Caco-2 (cell line): ENCODE measurements at regions of chr13 and their contacts with region 1.

Region 1: DNA sequence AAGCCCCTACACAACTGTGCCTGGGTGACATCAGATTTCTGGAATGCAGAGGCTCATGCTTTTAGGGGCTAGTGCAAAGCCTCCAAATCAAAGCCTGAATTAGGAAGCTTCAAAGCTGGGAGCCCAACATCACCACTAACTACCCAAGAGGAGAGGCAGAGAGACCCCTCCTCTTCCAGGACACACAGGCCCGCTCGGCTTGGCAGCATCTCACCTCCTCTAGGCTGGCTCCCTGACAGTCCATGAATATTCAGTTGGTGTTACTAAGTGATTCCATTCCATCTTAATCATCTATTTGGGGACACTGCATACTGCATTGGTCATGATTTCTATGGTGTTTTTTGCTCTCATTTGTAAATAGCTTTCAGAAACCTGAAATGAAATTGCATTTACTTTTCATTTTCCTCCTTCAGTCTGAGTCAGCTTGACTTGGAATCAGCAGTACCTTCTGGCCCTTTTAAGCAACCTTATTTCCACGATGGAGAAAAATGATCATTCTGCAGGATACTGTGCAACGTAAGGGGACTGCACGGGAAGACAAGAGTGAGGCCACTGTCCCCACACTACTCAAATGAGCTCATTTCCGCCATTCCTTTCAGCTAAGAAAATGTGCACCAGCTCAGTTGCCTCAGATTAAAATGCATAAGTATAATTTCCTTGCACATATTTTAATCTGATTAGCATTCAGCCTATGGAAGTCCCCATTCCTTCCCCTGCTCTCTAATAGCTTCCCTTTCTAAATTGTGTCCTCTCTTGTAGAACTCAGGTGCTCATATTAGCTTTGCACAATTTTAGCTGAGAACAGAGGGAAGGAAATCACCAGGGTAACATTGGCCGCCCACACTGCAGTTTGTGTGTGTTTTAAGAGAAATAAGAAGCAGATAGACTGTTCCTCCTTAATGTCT is 219.9 kb downstream of the RFC3 start:
- DNase-seq: no peak
- H3K4me3 ChIP-seq: no peak overlapping the region
- H3K4me3 Mint-ChIP-seq: no peak overlapping the region
- H3K27ac Mint-ChIP-seq: no peak overlapping the region
- H3K4me1 ChIP-seq: peaks cover 28% of the 10 kb centered on the region
- H3K4me1 Mint-ChIP-seq: peaks cover 22% of the 10 kb centered on the region
- H3K27me3 ChIP-seq: no peaks in the 10 kb centered on the region
- H3K27me3 Mint-ChIP-seq: no peaks in the 10 kb centered on the region
- CTCF ChIP-seq: no peak

Region 2: DNA sequence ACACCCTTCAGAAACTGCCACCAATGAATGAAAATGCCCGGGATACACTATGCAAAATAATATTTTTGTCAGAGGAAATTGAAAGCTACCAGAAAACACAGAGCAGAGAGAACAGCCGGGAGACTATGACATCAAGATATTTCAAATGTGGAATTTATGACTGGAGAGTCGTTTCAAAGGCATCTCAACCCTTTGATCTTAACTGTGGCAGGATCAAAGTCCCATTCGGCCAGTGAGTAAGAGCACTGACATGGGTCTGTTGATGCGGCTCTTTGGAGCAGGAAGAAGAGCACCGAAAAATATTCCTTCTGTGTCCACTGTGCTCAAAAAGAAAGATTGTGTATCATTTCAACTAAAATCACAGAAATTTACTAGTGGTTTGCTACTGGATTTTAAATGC is 18.0 kb before region 1 on chr13:
- CTCF ChIA-PET with region 1: no interaction called
- POLR2A ChIA-PET with region 1: no interaction called
- intact Hi-C with region 1: loop called (anchors 1 kb)
- DNase-seq: peak; percentile 83 to 93
- H3K4me3 ChIP-seq: 0 out of 2 replicates have a peak overlapping the region, but pooled peaks have one; percentile 17
- H3K4me3 Mint-ChIP-seq: peak overlapping the region; percentile 66
- H3K27ac Mint-ChIP-seq: peak overlapping the region; percentile 88
- H3K4me1 ChIP-seq: peaks cover 26% of the 10 kb centered on the region
- H3K4me1 Mint-ChIP-seq: peaks cover 29% of the 10 kb centered on the region
- H3K27me3 ChIP-seq: no peaks in the 10 kb centered on the region
- H3K27me3 Mint-ChIP-seq: no peaks in the 10 kb centered on the region
- CTCF ChIP-seq: no peak

Region 3: GRCh38 chr13:34416833-34417425 is 379.0 kb after region 1 on chr13:
- CTCF ChIA-PET with region 1: no interaction called
- POLR2A ChIA-PET with region 1: no interaction called
- intact Hi-C with region 1: loop called (anchors 5 kb)
- DNase-seq: no peak
- H3K4me3 ChIP-seq: no peak overlapping the region
- H3K4me3 Mint-ChIP-seq: no peak overlapping the region
- H3K27ac Mint-ChIP-seq: no peak overlapping the region
- H3K4me1 ChIP-seq: no peaks in the 10 kb centered on the region
- H3K4me1 Mint-ChIP-seq: no peaks in the 10 kb centered on the region
- H3K27me3 ChIP-seq: no peaks in the 10 kb centered on the region
- H3K27me3 Mint-ChIP-seq: no peaks in the 10 kb centered on the region
- CTCF ChIP-seq: no peak